H1 (cell line): ENCODE measurements at regions of chr9 and their contacts with region 1.

Region 1: DNA sequence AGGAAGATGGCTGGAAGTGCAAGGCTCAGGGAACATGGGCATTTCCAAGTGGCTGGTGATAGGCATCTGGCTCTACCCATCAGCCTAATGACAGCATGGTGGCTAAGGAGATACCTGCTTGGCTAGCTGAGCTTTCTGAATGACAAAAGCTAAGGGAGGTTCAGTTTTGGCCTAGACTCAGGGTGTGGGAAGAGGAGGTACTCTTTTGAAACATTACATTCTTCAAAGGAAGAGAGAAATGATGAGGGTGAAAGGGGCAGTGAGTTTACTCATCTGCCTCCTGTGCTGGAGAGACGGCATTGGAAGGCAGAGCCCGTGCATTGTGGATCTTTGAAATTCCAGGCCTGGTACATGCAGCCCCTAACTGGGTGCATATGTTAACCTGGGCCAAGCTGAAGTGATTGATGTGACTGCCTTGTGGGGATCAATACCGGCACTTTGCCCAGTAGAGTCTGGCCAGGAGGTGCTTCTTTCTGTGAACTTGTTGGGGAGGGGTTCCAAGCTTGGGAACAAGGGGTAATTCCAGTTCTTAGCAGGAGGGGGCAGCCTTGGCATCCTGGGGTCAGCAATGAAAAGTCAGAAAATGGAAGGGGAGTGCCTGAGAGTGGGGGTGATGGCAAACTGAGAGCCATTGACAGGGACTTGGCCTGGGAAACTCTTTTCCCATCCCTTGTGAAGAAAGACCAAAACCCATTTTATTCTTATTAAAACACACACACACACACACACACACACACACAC is 108.6 kb downstream of the ACER2 start:
- DNase-seq: peak; percentile 25 to 90
- H3K4me3 ChIP-seq: no peak overlapping the region
- H3K27ac ChIP-seq: no peak overlapping the region
- H3K4me1 ChIP-seq: no peaks in the 10 kb centered on the region; a peak in 1 of 7 replicates
- H3K27me3 ChIP-seq: peaks cover 0 to 1% (median 0%) of the 10 kb centered on the region in 4 experiments; a peak in 1 of 7 replicates
- CTCF ChIP-seq: peak; percentile 70 to 83 (median 80)
- EP300 ChIP-seq: no peak
- POLR2A ChIP-seq: no peak
- RAD21 ChIP-seq: peak; percentile 84 to 89

Region 2: DNA sequence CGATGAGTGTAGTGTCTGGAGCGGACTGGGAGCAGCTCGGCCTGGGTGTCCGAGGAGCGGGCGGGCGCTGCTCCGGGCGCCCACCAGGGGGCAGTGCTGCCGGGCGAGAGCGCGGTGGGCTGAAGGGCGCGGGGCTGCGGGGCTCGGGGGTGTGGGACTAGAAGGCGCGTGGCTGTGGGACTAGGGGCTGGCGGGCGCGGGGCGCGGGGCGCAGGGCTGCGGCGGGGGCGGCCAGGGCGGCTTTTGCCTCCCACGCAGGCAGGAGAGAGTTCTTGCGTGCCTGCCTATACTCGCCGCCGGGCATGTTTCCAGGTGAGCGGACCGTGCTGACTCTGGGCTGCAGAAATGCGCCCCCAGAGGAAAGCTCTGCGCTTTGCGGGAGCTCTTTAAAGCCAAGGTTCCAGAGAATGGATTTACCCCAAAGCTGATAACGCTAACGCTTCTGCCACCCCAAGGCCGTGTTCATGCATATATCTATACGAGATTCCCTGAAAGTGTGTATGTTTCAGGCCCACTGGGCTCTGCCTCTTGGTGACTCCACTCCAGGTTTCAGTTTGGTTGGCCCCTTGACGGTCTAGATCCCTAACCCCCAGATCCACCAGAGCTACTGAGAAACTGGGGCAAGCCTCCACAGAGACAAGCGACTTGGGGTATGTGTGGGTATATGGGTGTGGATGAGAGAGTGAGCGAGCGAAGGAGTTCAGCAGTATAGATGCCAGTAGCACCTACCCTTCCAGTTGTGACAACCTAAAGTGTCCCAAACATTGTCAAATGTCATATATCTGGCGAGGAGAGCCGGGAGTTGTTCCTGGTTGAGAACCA is 52.4 kb before region 1 on chr9:
- CTCF ChIA-PET with region 1: interaction called, 11 read pairs
- POLR2A ChIA-PET with region 1: no interaction called
- DNase-seq: peak; percentile 51 to 93
- H3K4me3 ChIP-seq: peak overlapping the region; percentile 44 to 73 (median 46)
- H3K27ac ChIP-seq: no peak overlapping the region
- H3K4me1 ChIP-seq: no peaks in the 10 kb centered on the region
- H3K27me3 ChIP-seq: peaks cover 0 to 2% (median 0%) of the 10 kb centered on the region in 4 experiments; a peak in 2 of 7 replicates
- CTCF ChIP-seq: peak; percentile 67 to 90 (median 87)
- EP300 ChIP-seq: no peak
- POLR2A ChIP-seq: peak in 1 of 2 experiments; percentile 54; a peak in 1 of 3 replicates
- RAD21 ChIP-seq: peak; percentile 29 to 52; a peak in 2 of 4 replicates

Region 3: DNA sequence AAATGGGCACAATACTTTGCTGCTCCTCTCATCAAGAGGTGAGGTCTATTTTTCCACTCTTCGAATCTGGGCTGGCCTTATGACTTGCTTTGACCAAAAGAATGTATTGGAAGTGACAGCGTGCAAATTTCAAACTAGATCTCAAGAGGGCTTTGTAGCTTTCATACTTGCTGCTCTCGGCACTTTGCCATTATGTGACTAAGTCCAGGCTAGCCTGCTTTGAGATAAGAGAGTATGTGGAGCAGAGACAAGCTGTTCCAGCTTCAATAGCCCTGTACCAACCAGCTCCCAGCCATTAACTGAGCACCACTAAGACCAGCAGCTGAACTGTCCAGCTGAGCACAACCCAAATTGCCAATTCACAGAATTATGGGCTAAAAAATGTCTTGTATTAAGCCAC is 16.0 kb after region 1 on chr9:
- CTCF ChIA-PET with region 1: interaction called, 33 read pairs
- POLR2A ChIA-PET with region 1: interaction called, 3 read pairs
- DNase-seq: no peak
- H3K4me3 ChIP-seq: no peak overlapping the region
- H3K27ac ChIP-seq: no peak overlapping the region
- H3K4me1 ChIP-seq: no peaks in the 10 kb centered on the region
- H3K27me3 ChIP-seq: no peaks in the 10 kb centered on the region
- CTCF ChIP-seq: no peak
- EP300 ChIP-seq: no peak
- POLR2A ChIP-seq: no peak
- RAD21 ChIP-seq: no peak

Region 4: GRCh38 chr9:19568946-19569345 is 51.6 kb after region 1 on chr9:
- CTCF ChIA-PET with region 1: interaction called, 10 read pairs
- POLR2A ChIA-PET with region 1: no interaction called
- DNase-seq: no peak
- H3K4me3 ChIP-seq: no peak overlapping the region
- H3K27ac ChIP-seq: no peak overlapping the region
- H3K4me1 ChIP-seq: no peaks in the 10 kb centered on the region; a peak in 1 of 7 replicates
- H3K27me3 ChIP-seq: no peaks in the 10 kb centered on the region
- CTCF ChIP-seq: no peak
- EP300 ChIP-seq: no peak
- POLR2A ChIP-seq: no peak
- RAD21 ChIP-seq: no peak

Region 5: DNA sequence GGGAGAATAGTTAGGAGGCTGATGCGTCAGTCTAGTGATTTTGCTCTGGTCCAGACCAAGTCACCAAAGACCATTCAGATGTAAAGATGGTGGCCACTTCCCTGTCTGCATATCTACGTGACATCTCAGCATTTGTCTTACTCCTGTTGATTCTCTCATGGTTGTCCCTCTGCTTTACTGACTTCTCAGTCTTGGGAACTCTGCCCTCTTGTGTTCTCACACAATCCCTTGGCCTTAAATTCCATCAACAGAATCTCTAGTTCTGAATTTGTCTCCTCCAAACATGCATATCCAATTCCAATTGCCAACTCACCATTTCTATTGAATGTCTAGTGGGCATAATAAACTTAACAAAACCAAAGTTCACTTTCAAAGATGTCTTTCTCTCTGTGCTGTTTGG is 123.7 kb after region 1 on chr9:
- CTCF ChIA-PET with region 1: interaction called, 23 read pairs
- POLR2A ChIA-PET with region 1: no interaction called
- DNase-seq: no peak
- H3K4me3 ChIP-seq: no peak overlapping the region
- H3K27ac ChIP-seq: no peak overlapping the region
- H3K4me1 ChIP-seq: no peaks in the 10 kb centered on the region
- H3K27me3 ChIP-seq: no peaks in the 10 kb centered on the region
- CTCF ChIP-seq: peak in 2 of 3 experiments; percentile 40 to 42; a peak in 3 of 4 replicates
- EP300 ChIP-seq: no peak
- POLR2A ChIP-seq: no peak
- RAD21 ChIP-seq: peak; percentile 56 to 63